Activated CD4-positive, alpha-beta memory T cell treated with anti-CD3 and anti-CD28 coated beads for 36 hours (primary cell): ENCODE measurements at regions of chr12 and their contacts with region 1.

Region 1: GRCh38 chr12:111841750-111842555 is at the start of gene MAPKAPK5:
- DNase-seq: peak; percentile 98
- H3K4me3 Mint-ChIP-seq: peak within 1 kb of the TSS; percentile 98
- H3K27ac Mint-ChIP-seq: peak within 1 kb of the TSS; percentile 95
- H3K4me1 Mint-ChIP-seq: peaks cover 56% of the 10 kb centered on the region
- H3K27me3 Mint-ChIP-seq: no peaks in the 10 kb centered on the region
- total RNA-seq, gene MAPKAPK5: 53.7 to 53.9 TPM

Region 2: DNA sequence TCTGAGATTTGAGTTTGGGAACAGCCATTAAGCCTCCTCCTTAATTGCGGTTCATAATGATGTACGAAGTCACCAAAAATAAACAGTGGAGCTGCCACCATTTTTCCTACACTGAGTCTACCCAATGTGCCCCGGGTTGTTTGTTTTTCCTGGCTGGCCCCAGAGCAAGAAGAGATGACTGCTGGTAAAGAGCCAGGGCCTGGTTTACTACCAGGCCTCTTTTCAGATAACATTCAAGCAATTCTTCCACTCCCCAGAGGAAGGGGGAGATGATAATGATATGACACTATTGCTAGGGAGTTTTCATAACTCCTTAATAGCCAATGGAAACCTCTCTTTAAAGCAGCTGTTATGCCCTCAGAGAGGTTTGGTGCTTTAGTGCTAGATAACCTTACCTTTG is 198.5 kb before region 1 on chr12:
- CTCF ChIA-PET with region 1: no interaction called
- POLR2A ChIA-PET with region 1: no interaction called
- intact Hi-C with region 1: no loop called
- DNase-seq: no peak
- H3K4me3 Mint-ChIP-seq: no peak overlapping the region
- H3K27ac Mint-ChIP-seq: no peak overlapping the region
- H3K4me1 Mint-ChIP-seq: no peaks in the 10 kb centered on the region
- H3K27me3 Mint-ChIP-seq: no peaks in the 10 kb centered on the region

Region 3: DNA sequence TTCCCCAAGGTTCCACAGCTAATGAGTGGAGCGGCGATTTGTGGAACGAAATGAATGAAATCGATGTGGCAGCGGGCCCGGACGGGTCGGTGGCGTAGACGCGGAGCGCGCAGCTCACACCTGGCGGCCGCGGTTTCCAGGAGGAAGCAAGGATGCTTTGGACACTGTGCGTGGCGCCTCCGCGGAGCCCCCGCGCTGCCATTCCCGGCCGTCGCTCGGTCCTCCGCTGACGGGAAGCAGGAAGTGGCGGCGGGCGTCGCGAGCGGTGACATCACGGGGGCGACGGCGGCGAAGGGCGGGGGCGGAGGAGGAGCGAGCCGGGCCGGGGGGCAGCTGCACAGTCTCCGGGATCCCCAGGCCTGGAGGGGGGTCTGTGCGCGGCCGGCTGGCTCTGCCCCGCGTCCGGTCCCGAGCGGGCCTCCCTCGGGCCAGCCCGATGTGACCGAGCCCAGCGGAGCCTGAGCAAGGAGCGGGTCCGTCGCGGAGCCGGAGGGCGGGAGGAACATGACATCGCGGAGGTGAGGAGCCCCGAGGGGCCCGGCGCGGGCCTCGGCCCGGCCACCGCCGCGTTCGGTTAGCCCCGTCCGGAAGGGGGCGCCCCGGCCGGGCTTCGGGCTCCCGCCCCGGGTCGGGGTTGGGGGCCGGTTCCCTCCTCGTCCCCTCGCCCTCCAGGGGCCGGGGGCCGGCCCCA is 576.8 kb after region 1 on chr12 and contains the start of gene PTPN11:
- CTCF ChIA-PET with region 1: no interaction called
- POLR2A ChIA-PET with region 1: interaction called, 4 read pairs
- intact Hi-C with region 1: loop called (anchors 5 kb)
- DNase-seq: peak; percentile 93
- H3K4me3 Mint-ChIP-seq: peak within 1 kb of the TSS; percentile 91
- H3K27ac Mint-ChIP-seq: peak within 1 kb of the TSS; percentile 94
- H3K4me1 Mint-ChIP-seq: peaks cover 33% of the 10 kb centered on the region
- H3K27me3 Mint-ChIP-seq: no peaks in the 10 kb centered on the region
- total RNA-seq, gene PTPN11: 137 to 145 TPM

Region 4: GRCh38 chr12:113462117-113462774 is 1620.3 kb after region 1 on chr12:
- CTCF ChIA-PET with region 1: no interaction called
- POLR2A ChIA-PET with region 1: no interaction called
- intact Hi-C with region 1: no loop called
- DNase-seq: peak; percentile 80
- H3K4me3 Mint-ChIP-seq: peak overlapping the region; percentile 70
- H3K27ac Mint-ChIP-seq: no peak overlapping the region
- H3K4me1 Mint-ChIP-seq: peaks cover 28% of the 10 kb centered on the region
- H3K27me3 Mint-ChIP-seq: peaks cover 53% of the 10 kb centered on the region